ENCODE measurements at regions of chr20 and their contacts with region 1.

Region 1: GRCh38 chr20:56468316-56469082 is at the start of gene RTF2:
- DNase-seq: peak; percentile 93 to 99 (median 96)
- ATAC-seq: peak; percentile 99
- H3K4me3 ChIP-seq: peak within 1 kb of the TSS; percentile 74
- H3K4me3 Mint-ChIP-seq: peak within 1 kb of the TSS; percentile 94 to 100 (median 100)
- H3K27ac ChIP-seq: peak within 1 kb of the TSS; percentile 88
- H3K27ac Mint-ChIP-seq: peak within 1 kb of the TSS; percentile 95 to 100 (median 99)
- H3K4me1 ChIP-seq: peaks cover 27 to 31% of the 10 kb centered on the region in 2 donors
- H3K4me1 Mint-ChIP-seq: peaks cover 27 to 53% (median 48%) of the 10 kb centered on the region in 7 donors
- H3K27me3 ChIP-seq: no peaks in the 10 kb centered on the region
- H3K27me3 Mint-ChIP-seq: no peaks in the 10 kb centered on the region
- total RNA-seq, gene RTF2: 62.5 to 118 (median 72.0) TPM

Region 2: DNA sequence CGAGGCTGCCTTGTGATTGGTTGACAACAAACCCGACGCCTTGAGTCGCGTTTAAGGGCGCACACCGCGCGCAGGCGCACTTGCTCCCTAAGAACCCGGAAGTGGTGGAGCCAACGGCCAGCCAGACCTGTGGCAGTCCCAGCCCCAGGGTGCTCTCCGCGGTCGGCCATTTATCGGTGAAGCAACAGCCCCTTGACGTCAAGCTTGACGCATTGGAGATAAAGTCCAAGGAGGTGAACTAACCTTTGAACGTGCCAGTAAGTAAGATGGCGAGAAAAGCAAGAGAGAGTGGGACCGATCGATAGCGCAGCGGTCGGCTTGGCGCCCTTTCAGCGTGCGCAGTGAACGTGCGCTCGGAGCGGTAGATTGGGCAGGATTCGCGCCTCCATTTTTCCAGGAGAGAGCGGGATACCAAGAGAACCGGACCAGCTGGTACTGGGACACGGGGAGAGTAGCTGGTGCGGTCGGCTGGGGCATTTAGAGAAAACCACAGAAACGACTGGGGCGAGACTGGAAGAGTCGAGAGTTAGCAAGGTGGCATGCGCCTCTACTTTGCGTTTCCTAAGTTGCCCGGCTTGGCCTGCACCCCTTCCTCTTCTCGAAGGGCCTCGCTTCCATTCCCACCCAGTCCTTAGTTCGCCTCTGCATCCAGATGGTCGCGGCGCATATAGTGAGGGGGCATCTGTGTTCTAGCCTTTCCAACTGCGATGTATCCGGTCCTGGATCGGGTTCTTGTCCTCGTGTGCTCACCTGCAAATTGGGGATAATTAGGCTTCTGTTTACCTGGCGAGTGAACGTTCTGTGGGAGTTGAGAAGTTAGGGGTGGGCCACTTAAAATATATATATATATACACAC is 76.0 kb before region 1 on chr20 and contains the start of gene CSTF1:
- CTCF ChIA-PET with region 1: no interaction called
- POLR2A ChIA-PET with region 1: interaction called, 8 read pairs
- intact Hi-C with region 1: loop called (anchors 1 kb)
- DNase-seq: peak; percentile 98 to 99 (median 99)
- ATAC-seq: peak; percentile 92
- H3K4me3 ChIP-seq: peak within 1 kb of the TSS; percentile 92
- H3K4me3 Mint-ChIP-seq: no peak within 1 kb of the TSS
- H3K27ac ChIP-seq: peak within 1 kb of the TSS; percentile 83
- H3K27ac Mint-ChIP-seq: peak within 1 kb of the TSS in 1 of 9 donors; percentile 91
- H3K4me1 ChIP-seq: peaks cover 17 to 19% of the 10 kb centered on the region in 2 donors
- H3K4me1 Mint-ChIP-seq: peaks cover 8 to 51% (median 31%) of the 10 kb centered on the region in 7 donors
- H3K27me3 ChIP-seq: no peaks in the 10 kb centered on the region
- H3K27me3 Mint-ChIP-seq: no peaks in the 10 kb centered on the region
- total RNA-seq, gene CSTF1: 16.4 to 50.7 (median 46.7) TPM

Region 3: DNA sequence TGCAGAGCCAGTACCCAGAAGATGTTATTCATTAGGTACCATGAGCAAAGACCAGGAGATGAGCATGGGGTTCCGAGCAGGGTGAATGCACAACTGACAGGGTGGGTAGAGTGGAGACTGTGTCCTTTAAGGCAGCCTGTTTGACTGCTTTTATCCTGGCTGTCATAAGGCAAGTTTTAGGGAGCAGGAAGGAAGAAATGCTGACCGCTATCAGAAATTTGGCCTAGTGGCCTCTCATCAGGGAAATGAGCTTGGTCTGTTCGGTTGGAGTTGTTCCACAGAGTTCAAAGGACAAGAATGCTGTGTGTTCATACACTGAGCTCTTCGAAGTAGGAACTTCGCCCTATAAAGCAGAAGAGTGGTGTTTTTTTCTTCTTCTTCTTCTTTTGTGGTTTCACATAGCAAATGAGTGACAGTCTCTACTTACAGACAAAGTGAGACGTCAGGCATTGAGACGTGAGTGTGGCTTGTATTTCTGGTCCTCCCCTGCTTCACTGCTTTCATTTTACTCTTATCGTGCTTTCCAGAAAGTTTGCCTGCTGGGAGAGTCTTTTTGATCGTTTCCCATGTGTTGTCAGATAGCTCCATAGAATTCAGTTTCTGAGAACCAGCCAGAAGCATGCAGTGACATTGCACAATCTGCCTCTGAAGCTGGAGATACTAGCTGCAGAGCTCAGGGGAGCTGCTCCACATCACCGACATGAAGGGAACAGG is 56.6 kb before region 1 on chr20 and contains the start of gene CASS4:
- CTCF ChIA-PET with region 1: no interaction called
- POLR2A ChIA-PET with region 1: interaction called, 26 read pairs
- intact Hi-C with region 1: loop called (anchors 1 kb)
- DNase-seq: peak in 7 of 9 donors; percentile 65 to 83 (median 73)
- ATAC-seq: peak; percentile 91
- H3K4me3 ChIP-seq: peak within 1 kb of the TSS; percentile 71
- H3K4me3 Mint-ChIP-seq: peak within 1 kb of the TSS; percentile 88 to 97 (median 92)
- H3K27ac ChIP-seq: peak within 1 kb of the TSS; percentile 78
- H3K27ac Mint-ChIP-seq: peak within 1 kb of the TSS; percentile 89 to 99 (median 97)
- H3K4me1 ChIP-seq: peaks cover 26 to 32% of the 10 kb centered on the region in 2 donors
- H3K4me1 Mint-ChIP-seq: peaks cover 32 to 64% (median 61%) of the 10 kb centered on the region in 7 donors
- H3K27me3 ChIP-seq: no peaks in the 10 kb centered on the region
- H3K27me3 Mint-ChIP-seq: no peaks in the 10 kb centered on the region
- total RNA-seq, gene CASS4: 8.0 to 16.9 (median 14.3) TPM

Region 4: GRCh38 chr20:56439771-56440291 is 28.7 kb before region 1 on chr20:
- CTCF ChIA-PET with region 1: no interaction called
- POLR2A ChIA-PET with region 1: interaction called, 3 read pairs
- intact Hi-C with region 1: loop called (anchors 1 kb)
- DNase-seq: no peak
- ATAC-seq: peak; percentile 21
- H3K4me3 ChIP-seq: no peak overlapping the region
- H3K4me3 Mint-ChIP-seq: peak overlapping the region in 9 of 10 donors; percentile 64 to 82 (median 74)
- H3K27ac ChIP-seq: peak overlapping the region; percentile 59
- H3K27ac Mint-ChIP-seq: peak overlapping the region; percentile 81 to 95 (median 91)
- H3K4me1 ChIP-seq: peaks cover 36 to 43% of the 10 kb centered on the region in 2 donors
- H3K4me1 Mint-ChIP-seq: peaks cover 29 to 70% (median 51%) of the 10 kb centered on the region in 7 donors
- H3K27me3 ChIP-seq: no peaks in the 10 kb centered on the region
- H3K27me3 Mint-ChIP-seq: no peaks in the 10 kb centered on the region

Region 5: GRCh38 chr20:56522311-56522710 is 53.8 kb after region 1 on chr20:
- CTCF ChIA-PET with region 1: no interaction called
- POLR2A ChIA-PET with region 1: no interaction called
- intact Hi-C with region 1: loop called in 1 of 2 experiments (anchors 5 kb)
- DNase-seq: no peak
- ATAC-seq: no peak
- H3K4me3 ChIP-seq: no peak overlapping the region
- H3K4me3 Mint-ChIP-seq: peak overlapping the region in 4 of 10 donors; percentile 13 to 67 (median 48)
- H3K27ac ChIP-seq: no peak overlapping the region
- H3K27ac Mint-ChIP-seq: peak overlapping the region in 2 of 9 donors; percentile 54 to 78
- H3K4me1 ChIP-seq: peaks cover 0 to 7% of the 10 kb centered on the region in 2 donors
- H3K4me1 Mint-ChIP-seq: peaks cover 3 to 26% (median 20%) of the 10 kb centered on the region in 7 donors
- H3K27me3 ChIP-seq: no peaks in the 10 kb centered on the region
- H3K27me3 Mint-ChIP-seq: no peaks in the 10 kb centered on the region

Region 6: GRCh38 chr20:57709931-57710799 is 1241.7 kb after region 1 on chr20 and contains the start of gene PMEPA1:
- CTCF ChIA-PET with region 1: interaction called, 3 read pairs
- POLR2A ChIA-PET with region 1: no interaction called
- intact Hi-C with region 1: loop called in 1 of 2 experiments (anchors 5 kb)
- DNase-seq: peak; percentile 91 to 95 (median 93)
- ATAC-seq: peak; percentile 96
- H3K4me3 ChIP-seq: peak within 1 kb of the TSS; percentile 98
- H3K4me3 Mint-ChIP-seq: peak within 1 kb of the TSS; percentile 82 to 97 (median 94)
- H3K27ac ChIP-seq: peak within 1 kb of the TSS; percentile 88
- H3K27ac Mint-ChIP-seq: peak within 1 kb of the TSS; percentile 46 to 97 (median 95)
- H3K4me1 ChIP-seq: peaks cover 11 to 23% of the 10 kb centered on the region in 2 donors
- H3K4me1 Mint-ChIP-seq: peaks cover 15 to 55% (median 44%) of the 10 kb centered on the region in 7 donors
- H3K27me3 ChIP-seq: peaks cover 0 to 7% of the 10 kb centered on the region in 2 donors
- H3K27me3 Mint-ChIP-seq: peaks cover 0 to 51% (median 0%) of the 10 kb centered on the region in 5 donors
- total RNA-seq, gene PMEPA1: 0.44 to 10.0 (median 9.0) TPM